ENCODE measurements at regions of chr10 and their contacts with region 1.

Region 1: GRCh38 chr10:80498833-80499741 is 38.6 kb upstream of the SH2D4B start:
- DNase-seq: peak; percentile 86
- H3K4me3 Mint-ChIP-seq: peak overlapping the region; percentile 53
- H3K27ac Mint-ChIP-seq: peak overlapping the region; percentile 97
- H3K4me1 Mint-ChIP-seq: peaks cover 99% of the 10 kb centered on the region
- H3K27me3 Mint-ChIP-seq: no peaks in the 10 kb centered on the region

Region 2: GRCh38 chr10:80459047-80459931 is 39.8 kb before region 1 on chr10:
- CTCF ChIA-PET with region 1: interaction called, 916 read pairs
- intact Hi-C with region 1: loop called (anchors 1 kb)
- DNase-seq: peak; percentile 83
- H3K4me3 Mint-ChIP-seq: peak overlapping the region; percentile 76
- H3K27ac Mint-ChIP-seq: peak overlapping the region; percentile 93
- H3K4me1 Mint-ChIP-seq: peaks cover 82% of the 10 kb centered on the region
- H3K27me3 Mint-ChIP-seq: no peaks in the 10 kb centered on the region

Region 3: DNA sequence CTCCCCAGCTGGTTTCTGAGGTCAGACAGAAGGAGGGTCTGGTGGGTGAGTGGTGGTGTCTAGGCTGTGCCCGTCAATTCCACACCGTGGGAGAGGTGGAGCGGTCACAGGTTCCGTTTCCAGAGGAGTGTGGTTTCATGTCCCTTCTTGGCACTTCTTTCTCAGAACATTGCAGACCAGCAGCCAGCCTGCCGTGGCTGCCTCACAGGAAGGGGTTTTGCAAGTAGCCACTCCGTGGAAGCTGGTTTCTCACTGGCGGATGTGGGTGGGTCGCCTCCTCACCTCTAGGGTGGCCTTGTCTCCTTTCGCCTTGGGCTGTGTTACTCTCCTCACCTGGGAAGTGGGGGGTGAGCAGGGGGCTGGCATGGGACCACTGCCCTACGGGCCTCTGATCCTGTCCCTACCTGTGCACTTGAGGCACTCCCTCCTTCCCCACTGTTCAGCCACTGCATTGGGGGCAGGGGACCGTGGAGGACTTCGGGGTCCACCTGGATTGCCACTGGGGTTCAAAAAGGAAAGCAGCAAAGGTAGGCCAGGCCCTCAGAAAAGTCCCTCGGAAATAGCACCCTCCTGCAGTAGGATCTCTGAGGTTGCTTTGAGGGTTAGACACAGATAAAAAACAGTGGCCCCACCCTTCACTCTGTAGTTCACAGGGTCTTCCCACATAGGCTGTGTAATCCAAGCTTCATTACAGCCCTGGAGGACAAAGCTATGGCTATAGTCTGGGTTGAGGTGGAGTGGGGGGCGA is 11.1 kb before region 1 on chr10:
- CTCF ChIA-PET with region 1: interaction called, 165 read pairs
- intact Hi-C with region 1: loop called (anchors 1 kb)
- DNase-seq: peak; percentile 73
- H3K4me3 Mint-ChIP-seq: peak overlapping the region; percentile 32
- H3K27ac Mint-ChIP-seq: peak overlapping the region; percentile 86
- H3K4me1 Mint-ChIP-seq: peaks cover 98% of the 10 kb centered on the region
- H3K27me3 Mint-ChIP-seq: no peaks in the 10 kb centered on the region

Region 4: DNA sequence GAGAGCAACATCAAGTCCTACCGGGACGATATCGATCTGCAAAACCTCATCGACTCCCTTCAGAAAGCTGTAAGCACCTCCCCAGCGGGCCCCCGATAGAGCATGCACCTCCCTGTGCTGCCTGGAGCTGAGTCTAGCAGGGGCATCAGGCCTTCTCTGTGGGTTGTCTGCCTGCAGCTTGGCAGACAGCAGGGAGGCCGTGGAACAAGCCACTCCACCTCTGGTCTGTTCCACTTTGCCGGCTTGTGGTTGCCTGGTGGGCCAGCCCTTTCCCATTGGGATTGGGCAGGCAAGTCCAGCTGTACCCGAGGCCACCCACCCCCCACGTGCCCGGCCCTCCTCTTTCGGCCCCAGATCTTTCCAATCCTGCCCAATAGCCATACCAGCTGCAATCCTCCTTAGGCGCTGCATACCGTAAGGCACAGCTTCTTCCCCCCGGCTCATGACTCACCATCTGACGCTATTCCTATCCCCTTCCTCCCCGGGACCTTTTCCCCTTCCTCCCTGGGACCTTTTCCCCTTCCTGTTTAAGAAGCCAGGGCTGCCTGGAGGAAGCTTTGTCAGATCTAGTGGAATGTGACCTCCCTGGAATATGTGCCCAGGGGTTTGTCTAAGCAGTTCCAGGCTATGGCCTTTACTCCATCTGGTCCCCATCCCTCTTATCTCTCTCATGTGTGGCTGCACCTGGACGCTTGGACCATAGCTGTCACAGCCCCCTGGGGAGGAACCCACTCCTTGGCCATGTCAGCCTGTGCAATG is 10.5 kb after region 1 on chr10:
- CTCF ChIA-PET with region 1: interaction called, 165 read pairs
- intact Hi-C with region 1: no loop called
- DNase-seq: no peak
- H3K4me3 Mint-ChIP-seq: no peak overlapping the region
- H3K27ac Mint-ChIP-seq: peak overlapping the region; percentile 80
- H3K4me1 Mint-ChIP-seq: peaks cover 38% of the 10 kb centered on the region
- H3K27me3 Mint-ChIP-seq: no peaks in the 10 kb centered on the region